Mammary epithelial cell (primary cell): ENCODE measurements at regions of chr14 and their contacts with region 1.

Region 1: DNA sequence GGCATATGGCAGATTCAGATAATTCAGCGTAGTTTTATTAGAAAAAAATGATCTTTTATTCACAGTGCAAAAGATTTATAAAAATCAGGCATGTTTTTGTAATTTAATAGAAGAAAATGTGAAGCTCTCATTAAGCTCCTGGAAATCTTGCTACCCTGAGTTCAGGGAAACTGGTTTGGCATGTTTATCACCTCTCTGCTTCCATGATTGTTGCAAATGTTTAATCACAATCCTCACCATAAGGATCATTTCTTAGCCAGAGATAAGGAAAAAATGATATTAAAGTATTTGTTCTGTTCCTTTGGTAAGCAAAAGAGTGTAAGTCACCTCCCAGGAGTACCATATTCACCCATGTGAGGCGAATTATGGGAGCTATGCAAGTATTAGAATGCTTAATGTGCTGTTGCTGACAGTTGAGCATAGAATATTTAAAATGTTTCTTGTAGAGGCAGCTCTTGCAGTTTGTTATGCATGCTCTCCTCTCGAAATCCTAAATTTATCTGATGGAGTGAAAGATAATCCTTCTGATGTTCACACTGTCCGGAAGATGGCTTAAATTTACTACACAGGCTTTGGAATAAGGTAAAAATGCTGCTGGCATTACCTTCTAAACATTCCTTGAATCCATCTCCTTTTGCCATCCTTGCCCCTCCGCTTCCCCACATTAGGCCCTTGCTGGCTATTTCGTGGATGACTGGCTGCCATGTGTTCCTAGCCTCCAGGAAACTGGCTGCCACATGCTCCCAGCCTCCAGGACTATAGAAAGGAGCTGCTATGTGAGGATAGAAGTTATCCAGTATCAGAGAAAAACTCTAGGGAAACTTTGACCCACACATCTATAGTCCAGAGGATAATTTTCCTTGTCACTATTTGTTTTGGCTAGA is 115.8 kb upstream of the CCDC198 start:
- DNase-seq: no peak
- H3K4me3 ChIP-seq: no peak overlapping the region
- H3K27ac ChIP-seq: no peak overlapping the region
- H3K4me1 ChIP-seq: no peaks in the 10 kb centered on the region
- H3K27me3 ChIP-seq: no peaks in the 10 kb centered on the region
- CTCF ChIP-seq: no peak

Region 2: GRCh38 chr14:57574617-57575303 is 34.7 kb before region 1 on chr14:
- CTCF ChIA-PET with region 1: no interaction called
- dilution Hi-C with region 1: loop called (anchors 5 kb)
- in situ Hi-C with region 1: no loop called
- intact Hi-C with region 1: no loop called
- DNase-seq: no peak
- H3K4me3 ChIP-seq: no peak overlapping the region
- H3K27ac ChIP-seq: no peak overlapping the region
- H3K4me1 ChIP-seq: no peaks in the 10 kb centered on the region
- H3K27me3 ChIP-seq: no peaks in the 10 kb centered on the region
- CTCF ChIP-seq: peak in 1 of 2 donors; percentile 31